HAP-1 (cell line): ENCODE measurements at regions of chr20 and their contacts with region 1.

Region 1: GRCh38 chr20:33301192-33301930 is 18.3 kb downstream of the BPIFB1 start:
- DNase-seq: no peak
- H3K4me3 ChIP-seq: no peak overlapping the region
- H3K4me1 ChIP-seq: no peaks in the 10 kb centered on the region
- H3K27me3 ChIP-seq: peaks cover 11% of the 10 kb centered on the region

Region 2: GRCh38 chr20:32902456-32903420 is 398.6 kb before region 1 on chr20:
- in situ Hi-C with region 1: loop called (anchors 5 kb)
- DNase-seq: peak; percentile 36 to 72
- H3K4me3 ChIP-seq: no peak overlapping the region
- H3K4me1 ChIP-seq: no peaks in the 10 kb centered on the region
- H3K27me3 ChIP-seq: no peaks in the 10 kb centered on the region